A549 (cell line): ENCODE measurements at regions of chr22 and their contacts with region 1.

Region 1: GRCh38 chr22:41940832-41941765 is 5.9 kb downstream of the CENPM start:
- DNase-seq: peak; percentile 59 to 74
- ATAC-seq: peak; percentile 87 to 93
- H3K4me3 ChIP-seq: no peak overlapping the region
- H3K27ac ChIP-seq: peak overlapping the region in 1 of 2 experiments; percentile 49; a peak in 1 of 6 replicates
- H3K4me1 ChIP-seq: peaks cover 17% of the 10 kb centered on the region; the same call in 2 of the 3 replicates
- CTCF ChIP-seq: peak; percentile 70
- EP300 ChIP-seq: no peak
- POLR2A ChIP-seq: no peak
- RAD21 ChIP-seq: peak; percentile 75 to 82

Region 2: GRCh38 chr22:41666661-41667258 is 274.3 kb before region 1 on chr22:
- CTCF ChIA-PET with region 1: interaction called, 11 read pairs
- POLR2A ChIA-PET with region 1: no interaction called
- DNase-seq: peak; percentile 85 to 92
- ATAC-seq: peak; percentile 87 to 90
- H3K4me3 ChIP-seq: peak overlapping the region; percentile 40
- H3K27ac ChIP-seq: peak overlapping the region; percentile 90 to 97
- H3K4me1 ChIP-seq: peaks cover 41% of the 10 kb centered on the region
- CTCF ChIP-seq: peak; percentile 94
- EP300 ChIP-seq: no peak
- POLR2A ChIP-seq: peak; percentile 41; the same call in 1 of the 2 replicates
- RAD21 ChIP-seq: peak; percentile 57 to 65

Region 3: GRCh38 chr22:41752011-41752970 is 188.8 kb before region 1 on chr22:
- CTCF ChIA-PET with region 1: interaction called, 24 read pairs
- POLR2A ChIA-PET with region 1: no interaction called
- DNase-seq: no peak
- ATAC-seq: no peak
- H3K4me3 ChIP-seq: no peak overlapping the region
- H3K27ac ChIP-seq: no peak overlapping the region
- H3K4me1 ChIP-seq: no peaks in the 10 kb centered on the region
- CTCF ChIP-seq: no peak
- EP300 ChIP-seq: no peak
- POLR2A ChIP-seq: no peak
- RAD21 ChIP-seq: no peak

Region 4: DNA sequence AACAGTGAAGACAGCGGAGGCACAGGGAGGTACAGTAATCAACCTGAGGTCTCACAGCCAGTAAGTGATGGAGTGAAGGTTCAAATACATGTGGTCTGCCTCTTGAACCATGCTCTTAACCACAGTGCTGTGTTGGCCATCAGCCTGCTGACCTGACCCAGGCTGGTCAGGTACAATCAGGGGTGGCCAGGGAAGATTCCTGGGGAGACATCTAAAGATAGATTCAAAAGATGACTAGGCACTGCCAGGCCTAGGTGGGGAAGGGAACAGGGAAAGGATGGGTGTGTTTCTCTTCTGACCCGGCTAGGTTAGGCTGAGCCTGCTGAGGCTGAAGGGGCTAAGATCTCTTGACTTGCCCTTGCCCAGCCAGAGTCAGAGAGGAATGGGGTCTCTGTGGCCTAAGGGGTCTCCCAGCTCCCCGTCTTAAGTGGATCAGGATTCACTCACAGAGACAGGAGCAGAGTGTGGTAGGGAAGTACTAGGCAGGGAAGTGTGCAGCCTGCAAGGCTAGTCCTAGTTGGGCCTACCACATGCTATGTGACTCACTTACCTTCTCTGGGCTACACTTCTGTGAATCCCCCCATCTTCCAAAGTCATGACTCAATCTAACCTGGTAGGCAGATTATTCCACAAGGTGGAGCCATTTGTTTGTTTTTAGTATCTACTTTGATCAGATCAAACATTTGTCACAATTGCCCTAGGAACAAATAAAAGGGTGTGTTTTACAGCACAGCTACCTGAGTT is 118.6 kb before region 1 on chr22:
- CTCF ChIA-PET with region 1: interaction called, 12 read pairs
- POLR2A ChIA-PET with region 1: no interaction called
- DNase-seq: peak; percentile 62 to 67
- ATAC-seq: peak; percentile 77 to 86
- H3K4me3 ChIP-seq: no peak overlapping the region
- H3K27ac ChIP-seq: peak overlapping the region in 1 of 2 experiments; percentile 51; a peak in 1 of 6 replicates
- H3K4me1 ChIP-seq: peaks cover 10% of the 10 kb centered on the region
- CTCF ChIP-seq: peak; percentile 68
- EP300 ChIP-seq: no peak
- POLR2A ChIP-seq: no peak
- RAD21 ChIP-seq: peak; percentile 62

Region 5: GRCh38 chr22:41902932-41903421 is 38.1 kb before region 1 on chr22:
- CTCF ChIA-PET with region 1: interaction called, 10 read pairs
- POLR2A ChIA-PET with region 1: no interaction called
- DNase-seq: no peak
- ATAC-seq: no peak
- H3K4me3 ChIP-seq: no peak overlapping the region
- H3K27ac ChIP-seq: no peak overlapping the region
- H3K4me1 ChIP-seq: no peaks in the 10 kb centered on the region
- CTCF ChIP-seq: no peak
- EP300 ChIP-seq: no peak
- POLR2A ChIP-seq: no peak
- RAD21 ChIP-seq: no peak

Region 6: DNA sequence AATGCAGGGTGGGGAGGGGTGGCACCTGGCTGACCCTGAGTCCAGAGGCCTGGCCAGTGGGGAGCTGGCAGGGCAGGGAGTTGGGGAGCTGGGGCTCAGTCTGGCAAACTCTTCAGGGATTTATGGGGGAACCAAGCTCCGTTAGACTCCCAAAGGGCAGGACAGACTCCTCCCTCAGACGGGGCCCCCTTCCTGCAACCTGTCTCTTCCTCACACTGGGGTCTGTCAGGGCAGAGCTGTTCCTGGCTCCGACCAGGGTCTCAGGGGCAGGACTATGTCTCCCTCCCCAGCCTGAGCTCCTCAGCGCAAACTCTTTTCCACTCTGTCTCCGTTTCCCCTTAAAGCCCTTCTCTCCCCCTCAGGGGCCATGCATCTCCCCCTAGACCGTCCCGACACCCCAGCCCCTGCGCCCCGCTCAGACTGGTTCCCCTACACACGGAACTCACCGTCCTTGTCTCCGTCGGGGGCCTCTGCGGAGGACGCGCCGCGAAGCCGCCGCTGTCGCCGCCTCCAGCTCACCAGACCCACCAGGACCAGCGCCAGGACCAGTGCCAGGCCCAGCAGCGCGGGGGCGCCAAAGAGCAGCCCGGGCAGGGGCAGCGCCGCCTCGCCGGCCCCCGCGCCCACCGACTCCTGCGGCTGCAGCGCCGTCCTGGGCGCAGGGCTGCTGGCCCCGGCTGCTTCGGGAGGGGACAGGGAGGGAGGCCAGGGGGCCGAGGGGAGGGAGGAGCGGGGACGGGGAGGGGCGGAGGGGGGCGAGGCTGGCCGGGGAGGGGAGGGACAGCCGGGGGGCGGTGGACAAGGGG is 15.2 kb before region 1 on chr22:
- CTCF ChIA-PET with region 1: interaction called, 50 read pairs
- POLR2A ChIA-PET with region 1: no interaction called
- DNase-seq: peak in 1 of 2 experiments; percentile 48
- ATAC-seq: peak; percentile 76 to 81
- H3K4me3 ChIP-seq: peak overlapping the region; percentile 64
- H3K27ac ChIP-seq: peak overlapping the region; percentile 74 to 90
- H3K4me1 ChIP-seq: no peaks in the 10 kb centered on the region
- CTCF ChIP-seq: peak; percentile 71
- EP300 ChIP-seq: no peak
- POLR2A ChIP-seq: no peak
- RAD21 ChIP-seq: no peak; a peak in 1 of 5 replicates

Region 7: DNA sequence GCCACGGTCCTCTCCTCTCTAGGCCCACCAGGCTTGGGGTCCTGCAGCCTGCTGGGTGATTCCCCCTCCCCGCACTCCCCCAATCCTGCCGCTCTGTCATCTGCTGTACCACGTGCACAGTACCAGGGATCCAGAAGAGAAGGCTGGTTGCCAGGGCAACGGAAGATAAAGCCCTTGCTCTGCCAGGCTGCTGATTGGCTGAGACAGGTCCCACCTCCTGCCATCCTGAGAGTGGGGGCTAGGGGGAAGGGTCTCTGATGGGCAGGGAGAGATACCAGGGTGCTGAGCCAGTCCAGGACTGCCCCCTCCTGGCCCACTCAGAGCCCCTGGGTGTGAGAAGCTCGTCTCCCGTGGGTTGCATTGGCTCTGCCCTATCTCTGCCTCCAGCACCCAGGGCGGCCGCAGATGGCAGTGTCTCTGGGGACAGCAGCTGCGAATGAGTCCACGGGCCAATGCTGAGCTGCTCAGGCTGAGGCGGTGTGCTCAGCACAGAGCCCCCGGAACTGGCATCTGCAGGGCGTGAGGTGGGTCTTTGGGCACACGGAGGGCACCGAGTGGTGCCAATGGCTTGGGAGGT is 10.9 kb after region 1 on chr22 and contains the start of gene SMIM45:
- CTCF ChIA-PET with region 1: interaction called, 10 read pairs
- POLR2A ChIA-PET with region 1: no interaction called
- DNase-seq: no peak
- ATAC-seq: no peak; a peak in 2 of 6 replicates
- H3K4me3 ChIP-seq: no peak within 1 kb of the TSS
- H3K27ac ChIP-seq: no peak within 1 kb of the TSS
- H3K4me1 ChIP-seq: peaks cover 3% of the 10 kb centered on the region; the same call in 2 of the 3 replicates
- CTCF ChIP-seq: no peak
- EP300 ChIP-seq: no peak
- POLR2A ChIP-seq: no peak
- RAD21 ChIP-seq: no peak